HepG2 (cell line): ENCODE measurements at regions of chr20 and their contacts with region 1.

Region 1: DNA sequence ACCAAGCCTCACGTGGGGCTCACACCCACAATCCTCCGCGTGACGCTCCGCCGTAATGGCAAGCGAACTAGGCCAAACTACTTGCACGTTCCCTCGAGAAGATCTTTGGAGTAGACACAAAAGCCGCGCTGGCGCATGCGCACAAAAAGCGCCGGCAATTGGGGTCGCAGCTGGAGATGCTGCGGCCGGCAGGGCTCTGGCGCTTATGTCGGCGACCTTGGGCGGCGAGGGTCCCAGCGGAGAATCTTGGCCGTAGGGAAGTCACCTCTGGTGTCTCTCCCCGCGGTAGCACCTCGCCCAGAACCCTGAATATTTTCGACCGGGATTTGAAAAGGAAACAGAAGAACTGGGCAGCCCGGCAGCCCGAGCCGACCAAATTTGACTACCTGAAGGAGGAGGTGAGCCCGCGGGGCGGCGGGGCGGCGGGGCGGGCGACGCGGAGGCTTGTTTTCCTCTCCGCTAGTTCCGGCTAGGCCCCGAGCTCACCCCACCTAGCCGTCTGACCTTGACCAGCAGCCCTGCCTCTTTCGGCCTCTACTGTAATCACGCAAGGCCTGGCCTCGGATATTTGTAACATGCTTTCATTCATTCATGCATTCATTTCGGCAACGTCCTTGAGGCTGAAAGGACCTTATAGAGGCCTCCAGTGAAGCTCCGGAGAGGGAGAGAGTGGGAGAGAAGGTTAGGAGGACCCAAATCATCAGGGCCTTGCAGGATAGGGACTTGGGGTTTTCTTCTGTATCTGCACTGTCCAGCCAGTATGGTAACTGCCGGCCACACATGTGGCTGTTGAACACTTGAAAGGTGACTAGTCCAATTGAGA is at the starts of genes ESF1 and NDUFAF5:
- DNase-seq: peak; percentile 99
- ATAC-seq: peak; percentile 95
- H3K4me3 ChIP-seq: peak within 1 kb of the TSS; percentile 84 to 90 (median 86)
- H3K27ac ChIP-seq: peak within 1 kb of the TSS; percentile 93
- H3K4me1 ChIP-seq: peaks cover 66% of the 10 kb centered on the region
- H3K27me3 ChIP-seq: no peaks in the 10 kb centered on the region; a peak in 1 of 5 replicates
- CTCF ChIP-seq: peak; percentile 42
- EP300 ChIP-seq: peak; percentile 69 to 76; a peak in 2 of 4 replicates
- POLR2A ChIP-seq: peak; percentile 40 to 87; a peak in 3 of 4 replicates
- RAD21 ChIP-seq: peak; percentile 24
- total RNA-seq, gene ESF1: 66.9 and 95.1 TPM in 2 replicates
- total RNA-seq, gene NDUFAF5: 66.7 and 86.0 TPM in 2 replicates

Region 2: DNA sequence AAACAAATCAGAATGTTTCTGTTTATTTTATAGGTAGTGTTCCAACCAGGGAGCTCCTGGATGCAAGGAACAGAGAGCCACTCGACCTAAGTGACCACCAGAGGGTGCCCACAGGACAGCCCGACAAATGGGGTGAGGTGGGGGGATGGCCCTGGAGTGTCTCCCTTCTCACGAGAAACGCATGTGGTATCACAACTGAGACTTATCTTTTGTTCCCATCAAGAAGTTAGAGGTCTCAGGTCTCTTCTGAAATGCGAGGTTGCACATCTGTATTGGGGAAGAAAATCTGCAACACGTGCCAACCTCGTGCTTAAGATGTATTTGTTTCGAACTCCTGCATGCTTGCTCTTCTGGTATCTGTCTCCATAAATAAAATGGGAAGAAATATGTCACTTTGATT is 460.1 kb before region 1 on chr20:
- CTCF ChIA-PET with region 1: no interaction called
- POLR2A ChIA-PET with region 1: no interaction called
- in situ Hi-C with region 1: no loop called
- intact Hi-C with region 1: loop called (anchors 10 kb)
- DNase-seq: peak; percentile 74
- ATAC-seq: peak; percentile 99
- H3K4me3 ChIP-seq: no peak overlapping the region
- H3K27ac ChIP-seq: no peak overlapping the region
- H3K4me1 ChIP-seq: peaks cover 29% of the 10 kb centered on the region
- H3K27me3 ChIP-seq: no peaks in the 10 kb centered on the region
- CTCF ChIP-seq: peak; percentile 98
- EP300 ChIP-seq: no peak
- POLR2A ChIP-seq: no peak
- RAD21 ChIP-seq: peak; percentile 99

Region 3: GRCh38 chr20:13758884-13759283 is 26.2 kb before region 1 on chr20:
- CTCF ChIA-PET with region 1: no interaction called
- POLR2A ChIA-PET with region 1: no interaction called
- in situ Hi-C with region 1: no loop called
- intact Hi-C with region 1: no loop called
- DNase-seq: no peak
- ATAC-seq: no peak
- H3K4me3 ChIP-seq: no peak overlapping the region
- H3K27ac ChIP-seq: no peak overlapping the region
- H3K4me1 ChIP-seq: no peaks in the 10 kb centered on the region
- H3K27me3 ChIP-seq: no peaks in the 10 kb centered on the region
- CTCF ChIP-seq: no peak
- EP300 ChIP-seq: no peak
- POLR2A ChIP-seq: no peak
- RAD21 ChIP-seq: no peak

Region 4: GRCh38 chr20:13771853-13772453 is 13.2 kb before region 1 on chr20:
- CTCF ChIA-PET with region 1: interaction called, 3 read pairs
- POLR2A ChIA-PET with region 1: interaction called, 24 read pairs
- in situ Hi-C with region 1: no loop called
- intact Hi-C with region 1: no loop called
- DNase-seq: peak; percentile 28
- ATAC-seq: peak; percentile 46; the same call in 1 of the 3 replicates
- H3K4me3 ChIP-seq: no peak overlapping the region
- H3K27ac ChIP-seq: no peak overlapping the region
- H3K4me1 ChIP-seq: no peaks in the 10 kb centered on the region
- H3K27me3 ChIP-seq: no peaks in the 10 kb centered on the region
- CTCF ChIP-seq: peak; percentile 41
- EP300 ChIP-seq: no peak
- POLR2A ChIP-seq: no peak
- RAD21 ChIP-seq: no peak

Region 5: DNA sequence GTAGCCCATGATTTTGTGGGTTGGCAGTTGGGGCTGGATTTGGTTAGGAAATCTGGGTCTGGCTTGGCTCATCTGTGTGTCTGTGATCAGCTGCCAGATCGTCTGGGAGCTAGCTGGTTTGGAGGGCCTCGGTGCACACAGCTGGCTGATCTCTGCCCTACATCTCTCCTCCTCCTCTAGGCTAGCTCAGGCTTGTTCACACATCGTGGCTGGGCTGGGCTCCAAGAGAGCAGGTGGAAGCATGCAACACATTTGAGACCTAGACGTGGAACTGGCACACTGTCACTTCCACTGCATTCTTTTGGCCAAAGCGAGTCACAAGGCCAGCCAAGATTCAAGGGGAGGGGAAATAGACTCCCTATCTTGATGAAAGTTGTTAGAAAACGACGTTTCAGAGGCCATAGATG is 15.6 kb after region 1 on chr20:
- CTCF ChIA-PET with region 1: no interaction called
- POLR2A ChIA-PET with region 1: interaction called, 14 read pairs
- in situ Hi-C with region 1: no loop called
- intact Hi-C with region 1: no loop called
- DNase-seq: peak; percentile 89
- ATAC-seq: peak; percentile 100
- H3K4me3 ChIP-seq: no peak overlapping the region
- H3K27ac ChIP-seq: peak overlapping the region; percentile 34
- H3K4me1 ChIP-seq: peaks cover 26% of the 10 kb centered on the region
- H3K27me3 ChIP-seq: no peaks in the 10 kb centered on the region
- CTCF ChIP-seq: peak; percentile 12; the same call in 1 of the 2 replicates
- EP300 ChIP-seq: peak in 1 of 2 experiments; percentile 18; a peak in 1 of 4 replicates
- POLR2A ChIP-seq: peak in 1 of 2 experiments; percentile 41; a peak in 1 of 4 replicates
- RAD21 ChIP-seq: no peak